Endothelial cell of umbilical vein (primary cell): ENCODE measurements at regions of chr1 and their contacts with region 1.

Region 1: DNA sequence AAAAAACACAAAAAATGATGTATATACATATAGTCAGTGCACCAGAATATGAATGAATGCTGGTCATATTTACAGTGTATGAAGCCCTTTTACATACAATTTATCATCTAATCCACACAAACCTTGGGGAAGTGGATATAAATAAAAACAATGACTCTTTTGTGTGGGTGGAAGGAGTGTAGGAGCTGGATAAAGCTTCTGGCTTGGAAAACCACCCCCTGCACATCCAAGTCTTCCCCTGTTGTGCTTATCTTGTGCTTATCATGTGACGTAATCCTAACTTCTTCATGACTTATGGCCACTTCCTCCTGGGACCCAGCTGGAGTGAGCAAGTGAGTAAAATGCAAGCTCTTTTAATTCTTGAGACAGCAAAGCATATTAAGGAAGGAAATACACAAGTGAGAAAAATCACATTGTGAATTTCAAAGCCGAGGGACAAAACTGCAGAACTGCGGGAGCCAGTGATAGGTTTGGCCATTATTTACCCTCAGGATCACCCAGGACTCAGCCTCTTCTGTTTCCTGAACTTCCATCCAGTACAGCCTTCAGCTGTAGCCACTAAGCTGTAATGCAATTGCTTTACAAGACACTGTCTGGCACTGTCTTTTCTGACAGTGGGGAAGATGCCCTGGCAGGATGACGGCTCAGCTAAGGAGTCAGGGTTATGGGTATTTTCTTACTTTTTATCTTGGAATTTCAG is 104.0 kb upstream of the PPM1J start:
- DNase-seq: peak; percentile 95
- H3K4me3 ChIP-seq: peak overlapping the region in 1 of 3 experiments; percentile 43
- H3K27ac ChIP-seq: peak overlapping the region; percentile 93
- H3K4me1 ChIP-seq: peaks cover 31% of the 10 kb centered on the region
- H3K27me3 ChIP-seq: no peaks in the 10 kb centered on the region
- CTCF ChIP-seq: no peak
- POLR2A ChIP-seq: peak; percentile 18

Region 2: DNA sequence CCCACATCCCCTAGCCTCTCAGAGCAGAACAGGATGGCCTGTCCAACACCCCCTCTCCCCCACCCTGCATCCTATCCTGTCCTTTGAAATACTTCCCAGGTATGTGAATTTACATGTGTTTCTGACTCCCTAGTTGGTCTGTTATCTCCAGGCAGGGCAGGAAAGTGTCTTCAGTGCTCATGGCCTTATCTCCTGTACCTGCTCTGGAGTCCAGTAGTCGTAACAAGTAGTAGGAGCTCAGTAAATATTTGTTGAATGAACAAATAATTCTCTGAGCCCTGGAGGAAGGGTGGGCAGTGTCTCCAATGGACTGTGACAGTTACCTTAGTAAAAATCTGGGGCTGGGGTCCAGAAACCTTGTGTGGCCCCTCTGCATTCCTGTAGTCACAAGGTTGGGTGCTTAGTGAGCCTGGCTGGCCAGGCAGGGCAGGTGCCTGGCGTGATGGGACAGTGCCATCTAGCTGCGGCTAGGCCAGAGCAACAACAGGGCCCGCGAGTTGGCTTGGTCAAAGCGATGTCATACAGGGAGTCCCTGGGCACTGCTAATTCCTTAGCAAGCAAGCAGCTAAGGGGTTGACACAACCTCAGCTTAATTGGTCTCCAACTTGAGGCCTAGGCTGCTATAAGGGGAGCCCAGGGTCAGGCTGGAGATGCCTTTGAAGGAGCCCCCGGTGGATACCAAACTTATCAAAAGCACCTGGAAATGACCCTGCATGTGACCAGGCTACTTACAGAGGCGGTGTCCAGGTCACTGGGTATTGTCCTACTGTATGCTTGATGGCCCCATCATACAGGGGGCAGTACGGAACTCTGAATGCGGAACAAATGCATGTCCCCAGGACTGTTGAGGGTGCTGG is 15.0 kb before region 1 on chr1:
- CTCF ChIA-PET with region 1: interaction called, 17 read pairs
- POLR2A ChIA-PET with region 1: no interaction called
- dilution Hi-C with region 1: no loop called
- intact Hi-C with region 1: no loop called
- DNase-seq: peak; percentile 69
- H3K4me3 ChIP-seq: no peak overlapping the region
- H3K27ac ChIP-seq: no peak overlapping the region
- H3K4me1 ChIP-seq: no peaks in the 10 kb centered on the region
- H3K27me3 ChIP-seq: no peaks in the 10 kb centered on the region
- CTCF ChIP-seq: peak; percentile 77 to 91
- POLR2A ChIP-seq: no peak

Region 3: GRCh38 chr1:112833806-112834205 is 14.7 kb after region 1 on chr1:
- CTCF ChIA-PET with region 1: interaction called, 11 read pairs
- POLR2A ChIA-PET with region 1: no interaction called
- dilution Hi-C with region 1: no loop called
- intact Hi-C with region 1: no loop called
- DNase-seq: no peak
- H3K4me3 ChIP-seq: no peak overlapping the region
- H3K27ac ChIP-seq: no peak overlapping the region
- H3K4me1 ChIP-seq: no peaks in the 10 kb centered on the region
- H3K27me3 ChIP-seq: no peaks in the 10 kb centered on the region
- CTCF ChIP-seq: no peak
- POLR2A ChIP-seq: no peak

Region 4: GRCh38 chr1:113141650-113142473 is 322.7 kb after region 1 on chr1:
- CTCF ChIA-PET with region 1: no interaction called
- POLR2A ChIA-PET with region 1: no interaction called
- dilution Hi-C with region 1: no loop called
- intact Hi-C with region 1: no loop called
- DNase-seq: peak; percentile 48
- H3K4me3 ChIP-seq: no peak overlapping the region
- H3K27ac ChIP-seq: peak overlapping the region; percentile 59
- H3K4me1 ChIP-seq: peaks cover 31% of the 10 kb centered on the region
- H3K27me3 ChIP-seq: no peaks in the 10 kb centered on the region
- CTCF ChIP-seq: no peak
- POLR2A ChIP-seq: no peak